ENCODE measurements at regions of chr11 and their contacts with region 1.

Region 1: DNA sequence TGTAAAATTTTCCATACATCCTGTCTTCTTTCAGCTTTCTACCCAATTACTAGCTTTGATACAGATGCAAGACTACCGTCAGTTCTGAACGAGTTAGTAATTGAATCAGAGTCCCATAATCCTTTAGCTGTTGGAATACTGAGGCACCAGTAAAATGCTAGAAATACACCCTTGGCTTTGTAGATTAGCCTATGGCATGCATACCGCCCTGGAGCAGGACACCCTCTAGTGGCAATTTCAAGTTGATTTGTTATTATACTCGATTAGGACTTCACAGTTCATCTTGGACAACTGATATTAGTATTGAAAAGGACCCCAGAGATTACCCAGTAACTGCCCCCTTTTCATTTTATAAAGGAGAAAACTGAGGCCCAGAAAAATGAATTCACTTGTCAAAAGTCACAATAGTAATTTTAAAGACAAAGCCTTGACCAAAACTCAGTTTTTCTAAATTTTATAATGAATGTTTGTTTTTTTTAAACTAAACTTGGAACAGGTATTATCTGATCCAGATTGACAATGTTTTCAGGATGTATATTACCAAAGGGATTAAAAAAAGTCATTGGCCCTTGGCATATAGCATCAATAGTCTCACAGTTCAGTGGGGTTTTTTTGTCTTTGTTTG is 72.6 kb downstream of the HIPK3 start:
- DNase-seq: no peak
- H3K4me3 ChIP-seq: no peak overlapping the region
- H3K27ac ChIP-seq: no peak overlapping the region
- H3K4me1 ChIP-seq: peaks cover 68% of the 10 kb centered on the region
- H3K27me3 ChIP-seq: no peaks in the 10 kb centered on the region
- CTCF ChIP-seq: peak; percentile 31 to 52 (median 47)
- POLR2A ChIP-seq: no peak

Region 2: GRCh38 chr11:33168709-33169200 is 161.1 kb before region 1 on chr11:
- intact Hi-C with region 1: loop called (anchors 5 kb)
- DNase-seq: no peak
- H3K4me3 ChIP-seq: no peak overlapping the region
- H3K27ac ChIP-seq: no peak overlapping the region
- H3K4me1 ChIP-seq: no peaks in the 10 kb centered on the region
- H3K27me3 ChIP-seq: no peaks in the 10 kb centered on the region
- CTCF ChIP-seq: no peak
- POLR2A ChIP-seq: no peak

Region 3: GRCh38 chr11:33257897-33258630 is 71.8 kb before region 1 on chr11:
- intact Hi-C with region 1: loop called (anchors 5 kb)
- DNase-seq: peak in 1 of 2 donors; percentile 97
- H3K4me3 ChIP-seq: peak overlapping the region; percentile 76 to 98
- H3K27ac ChIP-seq: peak overlapping the region; percentile 100
- H3K4me1 ChIP-seq: peaks cover 37% of the 10 kb centered on the region
- H3K27me3 ChIP-seq: no peaks in the 10 kb centered on the region
- CTCF ChIP-seq: peak in 1 of 3 experiments; percentile 38
- POLR2A ChIP-seq: peak in 1 of 2 donors; percentile 66

Region 4: GRCh38 chr11:33376331-33377310 is 46.8 kb after region 1 on chr11:
- intact Hi-C with region 1: no loop called
- DNase-seq: no peak
- H3K4me3 ChIP-seq: peak overlapping the region; percentile 25 to 47
- H3K27ac ChIP-seq: no peak overlapping the region
- H3K4me1 ChIP-seq: no peaks in the 10 kb centered on the region
- H3K27me3 ChIP-seq: no peaks in the 10 kb centered on the region
- CTCF ChIP-seq: no peak
- POLR2A ChIP-seq: no peak

Region 5: DNA sequence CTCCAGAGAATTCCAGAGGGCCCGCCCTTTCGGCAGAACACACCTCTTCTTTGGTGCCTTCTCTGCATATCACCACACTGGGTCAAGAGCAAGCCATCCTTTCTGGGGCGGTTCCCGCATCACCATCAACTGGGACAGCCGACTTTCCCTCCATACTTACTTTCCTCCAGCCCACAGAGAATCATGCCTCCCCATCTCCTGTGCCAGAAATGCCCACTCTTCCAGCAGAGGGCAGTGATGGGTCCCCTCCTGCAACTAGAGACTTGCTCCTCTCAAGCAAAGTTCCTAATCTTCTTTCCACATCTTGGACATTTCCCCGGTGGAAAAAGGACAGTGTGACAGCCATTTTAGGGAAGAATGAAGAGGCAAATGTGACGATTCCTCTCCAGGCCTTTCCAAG is 213.1 kb after region 1 on chr11:
- intact Hi-C with region 1: no loop called
- DNase-seq: no peak
- H3K4me3 ChIP-seq: no peak overlapping the region
- H3K27ac ChIP-seq: no peak overlapping the region
- H3K4me1 ChIP-seq: no peaks in the 10 kb centered on the region
- H3K27me3 ChIP-seq: no peaks in the 10 kb centered on the region
- CTCF ChIP-seq: peak in 1 of 3 experiments; percentile 25
- POLR2A ChIP-seq: no peak

Region 6: GRCh38 chr11:33674035-33674814 is 344.4 kb after region 1 on chr11:
- intact Hi-C with region 1: no loop called
- DNase-seq: peak in 1 of 2 donors; percentile 72
- H3K4me3 ChIP-seq: no peak overlapping the region
- H3K27ac ChIP-seq: no peak overlapping the region
- H3K4me1 ChIP-seq: no peaks in the 10 kb centered on the region
- H3K27me3 ChIP-seq: no peaks in the 10 kb centered on the region
- CTCF ChIP-seq: no peak
- POLR2A ChIP-seq: no peak

Measured in vagina (tissue), 2 donors.